Panc1 (cell line): ENCODE measurements at regions of chr2 and their contacts with region 1.

Region 1: GRCh38 chr2:105179469-105180372 is 61.8 kb upstream of the GPR45 start:
- DNase-seq: peak; percentile 41
- ATAC-seq: peak; percentile 79
- H3K4me3 ChIP-seq: no peak overlapping the region
- H3K27ac ChIP-seq: no peak overlapping the region
- H3K4me1 ChIP-seq: peaks cover 4% of the 10 kb centered on the region; the same call in 1 of the 2 replicates
- H3K27me3 ChIP-seq: peaks cover 7% of the 10 kb centered on the region
- CTCF ChIP-seq: peak; percentile 78

Region 2: GRCh38 chr2:104889291-104889959 is 290.3 kb before region 1 on chr2:
- CTCF ChIA-PET with region 1: no interaction called
- POLR2A ChIA-PET with region 1: no interaction called
- in situ Hi-C with region 1: no loop called
- intact Hi-C with region 1: no loop called
- DNase-seq: no peak
- ATAC-seq: no peak
- H3K4me3 ChIP-seq: no peak overlapping the region
- H3K27ac ChIP-seq: no peak overlapping the region
- H3K4me1 ChIP-seq: no peaks in the 10 kb centered on the region
- H3K27me3 ChIP-seq: peaks cover 2% of the 10 kb centered on the region; the same call in 1 of the 2 replicates
- CTCF ChIP-seq: no peak

Region 3: GRCh38 chr2:105114551-105114950 is 65.2 kb before region 1 on chr2:
- CTCF ChIA-PET with region 1: interaction called, 7 read pairs
- POLR2A ChIA-PET with region 1: interaction called, 3 read pairs
- in situ Hi-C with region 1: no loop called
- intact Hi-C with region 1: loop called (anchors 2 kb)
- DNase-seq: peak; percentile 25
- ATAC-seq: no peak
- H3K4me3 ChIP-seq: no peak overlapping the region
- H3K27ac ChIP-seq: no peak overlapping the region
- H3K4me1 ChIP-seq: no peaks in the 10 kb centered on the region
- H3K27me3 ChIP-seq: no peaks in the 10 kb centered on the region
- CTCF ChIP-seq: peak; percentile 68; the same call in 1 of the 2 replicates

Region 4: GRCh38 chr2:105592288-105592687 is 412.6 kb after region 1 on chr2:
- CTCF ChIA-PET with region 1: no interaction called
- POLR2A ChIA-PET with region 1: no interaction called
- in situ Hi-C with region 1: no loop called
- intact Hi-C with region 1: no loop called
- DNase-seq: no peak
- ATAC-seq: no peak
- H3K4me3 ChIP-seq: no peak overlapping the region
- H3K27ac ChIP-seq: no peak overlapping the region
- H3K4me1 ChIP-seq: 0 out of 2 replicates have a peak, but pooled peaks cover 3% of the 10 kb centered on the region
- H3K27me3 ChIP-seq: no peaks in the 10 kb centered on the region
- CTCF ChIP-seq: no peak